Body of pancreas (tissue), 4 donors: ENCODE measurements at regions of chr10 and their contacts with region 1.

Region 1: GRCh38 chr10:14093730-14094484 is 236.8 kb downstream of the FRMD4A start:
- DNase-seq: no peak
- ATAC-seq: no peak
- H3K4me3 ChIP-seq: no peak overlapping the region
- H3K27ac ChIP-seq: no peak overlapping the region
- H3K4me1 ChIP-seq: peaks cover 11% of the 10 kb centered on the region
- H3K27me3 ChIP-seq: no peaks in the 10 kb centered on the region
- CTCF ChIP-seq: peak in 5 of 7 experiments; percentile 20 to 48 (median 38)
- POLR2A ChIP-seq: no peak

Region 2: DNA sequence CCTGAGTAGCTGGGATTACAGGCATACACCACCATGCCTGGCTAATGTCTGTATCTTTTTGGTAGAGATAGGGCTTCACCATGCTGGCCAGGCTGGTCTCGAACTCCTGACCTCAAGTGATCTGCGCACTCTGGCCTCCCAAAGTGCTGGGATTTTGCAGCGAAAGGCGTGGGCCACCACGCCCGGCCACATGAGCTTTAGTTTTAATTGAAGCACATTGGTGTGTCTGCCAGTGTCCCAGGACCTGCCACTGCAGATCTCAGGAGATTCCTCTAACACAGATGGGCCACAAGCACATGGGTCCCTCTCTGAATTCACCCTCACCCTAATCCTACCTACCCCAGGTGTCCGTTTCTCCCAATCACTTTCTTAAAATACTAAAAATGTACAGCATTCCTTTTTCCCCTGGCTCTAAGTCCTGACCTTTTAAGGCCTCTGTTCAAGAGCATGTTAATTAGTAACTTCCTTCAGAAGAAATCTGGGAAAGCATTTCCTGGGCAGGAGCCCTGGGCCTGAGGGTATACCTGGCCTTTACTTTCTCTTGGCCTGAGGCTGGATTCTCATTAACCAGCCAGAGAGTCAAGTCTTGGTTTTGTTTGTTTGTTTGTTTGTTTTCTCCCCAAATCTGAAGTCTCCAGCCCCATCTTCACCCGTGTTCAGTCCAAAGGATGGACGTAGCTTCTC is 424.6 kb before region 1 on chr10:
- intact Hi-C with region 1: no loop called
- DNase-seq: no peak
- ATAC-seq: peak; percentile 47
- H3K4me3 ChIP-seq: no peak overlapping the region
- H3K27ac ChIP-seq: peak overlapping the region in 3 of 4 donors; percentile 1 to 36 (median 26)
- H3K4me1 ChIP-seq: peaks cover 11% of the 10 kb centered on the region
- H3K27me3 ChIP-seq: no peaks in the 10 kb centered on the region
- CTCF ChIP-seq: no peak
- POLR2A ChIP-seq: no peak

Region 3: DNA sequence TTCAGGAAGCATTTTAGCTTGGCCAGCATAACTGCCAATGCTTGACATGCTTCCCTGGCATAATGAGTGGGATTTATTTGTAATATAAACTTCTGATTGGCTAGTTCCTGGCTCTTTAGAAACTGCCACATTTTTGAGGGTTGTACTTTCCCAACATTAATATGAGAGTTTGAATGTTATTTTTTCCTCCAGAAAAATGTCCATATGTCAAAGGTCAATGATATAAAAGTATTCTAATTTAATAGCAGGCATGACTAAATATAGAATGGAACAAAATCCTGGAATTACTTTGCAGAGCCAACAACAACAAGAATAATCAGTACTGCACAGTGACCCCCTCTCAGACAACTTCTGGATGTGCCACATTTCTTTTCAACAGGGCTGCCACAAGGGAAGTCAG is 154.5 kb before region 1 on chr10:
- intact Hi-C with region 1: loop called (anchors 5 kb)
- DNase-seq: no peak
- ATAC-seq: no peak
- H3K4me3 ChIP-seq: no peak overlapping the region
- H3K27ac ChIP-seq: no peak overlapping the region
- H3K4me1 ChIP-seq: no peaks in the 10 kb centered on the region
- H3K27me3 ChIP-seq: no peaks in the 10 kb centered on the region
- CTCF ChIP-seq: no peak
- POLR2A ChIP-seq: no peak

Region 4: DNA sequence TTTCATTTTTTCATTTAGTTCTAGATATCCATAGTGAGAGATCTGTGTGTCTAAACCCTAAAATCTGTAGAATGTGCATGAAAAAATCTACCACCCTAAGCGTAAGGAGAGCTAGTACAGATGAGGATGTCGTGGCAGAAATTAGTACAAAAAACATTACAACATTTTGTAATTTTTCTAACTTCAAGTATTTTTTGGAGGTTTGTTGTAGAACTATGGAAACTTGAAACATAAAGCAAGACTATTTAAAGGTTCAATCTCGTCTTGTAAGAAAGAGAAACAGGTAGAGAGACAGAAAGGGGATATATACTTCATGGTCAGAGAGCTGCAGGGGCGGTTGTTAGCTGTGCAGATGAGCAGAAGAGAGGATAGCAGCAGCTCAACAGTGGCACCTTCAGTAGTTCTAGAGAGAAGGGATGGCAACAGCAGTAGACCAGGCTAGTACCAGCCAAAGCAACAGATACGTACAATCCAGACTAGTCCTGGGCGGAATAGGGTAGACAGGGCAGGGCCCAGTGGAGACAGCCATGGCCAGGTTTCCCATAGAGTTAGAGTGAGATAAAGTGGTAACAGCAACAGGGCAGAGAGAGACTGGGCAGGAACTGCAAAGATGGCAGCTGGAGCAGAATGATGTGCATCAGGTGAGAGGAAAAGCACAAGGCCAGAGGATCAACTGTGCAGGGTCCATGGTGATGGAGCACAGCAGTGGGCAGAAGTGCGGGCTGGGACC is 91.6 kb after region 1 on chr10:
- intact Hi-C with region 1: no loop called
- DNase-seq: no peak
- ATAC-seq: no peak
- H3K4me3 ChIP-seq: no peak overlapping the region
- H3K27ac ChIP-seq: no peak overlapping the region
- H3K4me1 ChIP-seq: no peaks in the 10 kb centered on the region
- H3K27me3 ChIP-seq: no peaks in the 10 kb centered on the region
- CTCF ChIP-seq: no peak
- POLR2A ChIP-seq: peak in 2 of 3 donors; percentile 32 to 34